ENCODE measurements at regions of chr6 and their contacts with region 1.

Region 1: GRCh38 chr6:158999666-159000403 is at the start of gene RSPH3:
- DNase-seq: peak; percentile 97
- H3K4me3 Mint-ChIP-seq: peak within 1 kb of the TSS; percentile 96
- H3K27ac Mint-ChIP-seq: peak within 1 kb of the TSS; percentile 94
- H3K4me1 Mint-ChIP-seq: peaks cover 37% of the 10 kb centered on the region
- H3K27me3 Mint-ChIP-seq: no peaks in the 10 kb centered on the region
- total RNA-seq, gene RSPH3: 4.7 and 5.1 TPM in 2 replicates

Region 2: DNA sequence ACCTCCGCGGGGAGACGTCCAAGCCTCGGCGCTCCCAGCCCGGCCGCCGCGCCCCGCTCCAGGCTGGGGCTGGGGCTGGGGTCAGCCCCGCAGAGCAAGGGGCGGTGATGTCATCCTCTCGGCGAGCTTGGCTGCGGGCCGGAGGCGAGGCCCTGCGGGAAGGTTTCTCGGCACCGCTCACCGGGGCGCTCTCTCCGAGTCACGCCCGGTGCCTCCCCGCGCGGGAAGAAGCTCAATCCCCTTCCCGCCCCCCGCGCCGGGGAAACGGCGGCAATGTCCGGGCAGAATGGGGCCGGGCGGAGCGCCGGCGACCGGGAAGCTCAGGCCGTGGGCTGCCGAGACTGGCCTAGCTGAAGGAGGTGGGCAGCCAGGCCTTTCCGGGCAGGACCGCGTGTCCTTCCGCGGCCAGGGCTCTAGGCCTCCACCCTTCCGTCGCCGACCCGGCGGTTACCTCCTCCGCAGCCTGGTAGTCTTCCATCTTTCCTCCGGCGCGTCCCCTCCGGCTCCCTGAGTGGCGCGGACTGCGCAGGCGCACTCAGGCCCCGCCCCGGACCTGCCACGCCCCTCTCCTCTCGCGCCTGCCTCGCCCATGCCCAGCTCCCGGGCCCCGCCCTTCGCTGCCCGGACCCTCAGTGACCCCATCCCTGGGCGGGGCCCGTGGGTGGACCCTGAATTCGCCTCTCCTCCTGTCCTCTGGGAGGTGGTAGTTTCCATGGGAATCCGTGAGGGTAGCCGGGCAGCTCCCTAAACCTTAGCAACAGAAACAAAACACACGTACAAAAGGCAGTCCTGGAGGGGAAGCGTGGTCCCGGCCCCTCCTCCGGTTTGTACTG is 355.4 kb before region 1 on chr6 and contains the start of gene DYNLT1:
- intact Hi-C with region 1: loop called (anchors 5 kb)
- DNase-seq: peak; percentile 98
- H3K4me3 Mint-ChIP-seq: peak within 1 kb of the TSS; percentile 97
- H3K27ac Mint-ChIP-seq: peak within 1 kb of the TSS; percentile 97
- H3K4me1 Mint-ChIP-seq: peaks cover 72% of the 10 kb centered on the region
- H3K27me3 Mint-ChIP-seq: no peaks in the 10 kb centered on the region
- total RNA-seq, gene DYNLT1: 103 and 110 TPM in 2 replicates

Region 3: GRCh38 chr6:158853072-158853871 is 146.6 kb before region 1 on chr6:
- intact Hi-C with region 1: loop called (anchors 1 kb)
- DNase-seq: peak; percentile 96
- H3K4me3 Mint-ChIP-seq: no peak overlapping the region
- H3K27ac Mint-ChIP-seq: no peak overlapping the region
- H3K4me1 Mint-ChIP-seq: peaks cover 32% of the 10 kb centered on the region
- H3K27me3 Mint-ChIP-seq: no peaks in the 10 kb centered on the region

Region 4: DNA sequence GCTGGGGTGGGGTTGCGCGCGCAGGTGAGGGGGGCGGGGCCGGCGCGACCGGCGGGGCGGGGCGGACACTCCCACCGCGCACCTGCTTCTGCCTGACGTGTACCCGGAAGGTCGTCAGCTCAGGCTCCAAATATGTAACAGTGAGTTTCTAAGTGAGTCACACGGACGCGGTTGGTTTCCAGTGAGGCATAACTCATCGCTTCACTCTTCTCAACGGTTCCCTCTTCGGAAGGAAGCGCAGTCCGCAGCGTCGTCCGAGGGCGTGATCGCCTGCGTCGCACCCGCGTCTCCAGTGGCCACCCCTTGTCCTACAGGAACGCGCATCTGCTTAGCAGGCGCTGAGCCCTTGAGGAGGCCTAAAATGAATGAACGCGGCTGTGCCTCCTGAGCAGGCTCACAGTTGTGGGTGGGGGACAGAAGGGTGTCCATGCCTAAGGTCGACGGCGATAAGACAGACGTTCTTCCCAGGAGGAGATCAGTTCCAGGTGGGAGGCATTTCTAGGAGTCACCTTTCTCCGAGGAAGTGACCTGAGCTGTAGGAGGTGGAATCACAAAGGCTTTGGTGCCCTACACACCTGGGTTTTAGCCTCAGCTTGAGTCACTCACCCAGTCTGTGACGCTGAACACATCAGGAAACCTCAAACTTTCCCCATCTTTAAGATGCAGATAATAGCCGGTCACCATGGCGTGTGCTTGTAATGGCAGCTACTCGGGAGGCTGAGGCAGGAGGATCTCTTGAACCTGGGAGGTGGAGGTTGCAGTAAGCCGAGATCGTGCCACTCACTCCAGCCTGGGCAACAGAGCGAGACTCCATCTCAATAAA is 129.8 kb before region 1 on chr6:
- intact Hi-C with region 1: loop called (anchors 5 kb)
- DNase-seq: peak; percentile 96
- H3K4me3 Mint-ChIP-seq: peak overlapping the region; percentile 86
- H3K27ac Mint-ChIP-seq: peak overlapping the region; percentile 98
- H3K4me1 Mint-ChIP-seq: peaks cover 29% of the 10 kb centered on the region
- H3K27me3 Mint-ChIP-seq: peaks cover 4% of the 10 kb centered on the region

Region 5: GRCh38 chr6:159017757-159018559 is 18.1 kb after region 1 on chr6:
- intact Hi-C with region 1: loop called (anchors 1 kb)
- DNase-seq: no peak
- H3K4me3 Mint-ChIP-seq: peak overlapping the region; percentile 45
- H3K27ac Mint-ChIP-seq: peak overlapping the region; percentile 79
- H3K4me1 Mint-ChIP-seq: peaks cover 42% of the 10 kb centered on the region
- H3K27me3 Mint-ChIP-seq: no peaks in the 10 kb centered on the region

Region 6: GRCh38 chr6:159134701-159135364 is 135.0 kb after region 1 on chr6:
- intact Hi-C with region 1: loop called (anchors 2 kb)
- DNase-seq: peak; percentile 93
- H3K4me3 Mint-ChIP-seq: no peak overlapping the region
- H3K27ac Mint-ChIP-seq: no peak overlapping the region
- H3K4me1 Mint-ChIP-seq: peaks cover 6% of the 10 kb centered on the region
- H3K27me3 Mint-ChIP-seq: peaks cover 31% of the 10 kb centered on the region

Measured in activated CD4-positive, alpha-beta T cell treated with anti-CD3 and anti-CD28 coated beads, Interleukin-2, amount 10 ng/mL, durations not matched to agents 24 days and 14 days (primary cell).